HepG2 (cell line): ENCODE measurements at regions of chr20 and their contacts with region 1.

Region 1: DNA sequence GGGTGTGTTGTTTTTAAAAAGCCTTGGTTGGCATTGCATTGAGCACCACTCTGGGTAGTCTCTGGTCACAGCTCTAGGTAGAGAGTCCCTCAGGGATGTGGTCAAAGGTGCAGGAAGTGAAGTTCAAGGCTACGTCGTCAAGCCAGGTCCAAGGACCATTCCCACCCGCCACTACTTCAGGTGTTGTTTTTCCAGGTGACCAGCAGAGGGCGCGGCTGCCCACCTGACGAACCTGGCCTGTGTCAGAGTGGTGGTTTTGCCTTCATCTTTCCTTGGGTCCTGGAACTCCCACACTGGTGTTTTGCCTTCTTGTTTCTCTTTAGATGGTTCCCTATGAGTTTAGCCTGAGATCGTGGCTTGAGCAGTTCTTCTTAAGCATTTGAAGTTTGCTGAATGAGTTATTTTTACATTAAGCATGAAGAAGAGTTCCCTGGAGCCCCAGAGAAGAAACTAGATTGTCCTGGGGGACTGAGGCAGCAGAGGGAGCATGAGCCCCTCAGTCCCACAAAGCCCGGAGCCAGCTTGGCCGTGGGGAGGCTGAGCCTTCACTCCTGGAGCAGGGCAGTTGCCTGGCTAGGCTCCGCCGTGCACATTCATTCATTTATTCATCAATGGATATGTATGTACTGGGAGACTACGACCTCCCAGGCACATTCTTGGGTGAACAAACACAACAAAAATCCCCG is 5.6 kb upstream of the PHACTR3 start:
- DNase-seq: peak; percentile 55
- ATAC-seq: peak; percentile 89
- H3K4me3 ChIP-seq: no peak overlapping the region
- H3K27ac ChIP-seq: no peak overlapping the region
- H3K4me1 ChIP-seq: peaks cover 5% of the 10 kb centered on the region
- H3K27me3 ChIP-seq: peaks cover 3 to 22% of the 10 kb centered on the region in 2 experiments; a peak in 4 of 5 replicates
- CTCF ChIP-seq: peak; percentile 96
- EP300 ChIP-seq: no peak
- POLR2A ChIP-seq: no peak
- RAD21 ChIP-seq: peak; percentile 78

Region 2: DNA sequence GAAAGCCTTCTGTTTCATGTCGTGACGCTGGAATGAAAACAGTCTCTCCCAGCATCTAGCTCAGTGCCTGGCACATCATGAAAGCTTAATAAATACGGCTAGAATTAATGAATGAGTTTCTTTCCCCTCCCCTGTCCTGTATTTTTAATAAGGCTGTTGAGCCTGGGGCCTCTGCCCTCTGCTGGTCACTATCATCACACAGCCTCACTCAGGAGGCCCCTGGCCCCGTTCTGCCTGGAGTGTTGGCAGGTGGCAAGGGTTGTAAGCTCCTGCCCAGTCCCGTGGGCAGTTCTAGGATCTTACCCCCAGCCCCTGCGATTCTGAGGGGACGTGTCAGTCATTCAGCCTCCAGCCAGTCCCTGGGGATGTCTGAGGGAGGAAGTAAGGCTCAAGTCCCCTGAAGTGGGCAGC is 47.0 kb after region 1 on chr20:
- CTCF ChIA-PET with region 1: interaction called, 3 read pairs
- POLR2A ChIA-PET with region 1: no interaction called
- in situ Hi-C with region 1: no loop called
- intact Hi-C with region 1: loop called (anchors 2 kb)
- DNase-seq: no peak
- ATAC-seq: peak; percentile 94
- H3K4me3 ChIP-seq: no peak overlapping the region
- H3K27ac ChIP-seq: no peak overlapping the region
- H3K4me1 ChIP-seq: no peaks in the 10 kb centered on the region
- H3K27me3 ChIP-seq: peaks cover 0 to 21% of the 10 kb centered on the region in 2 experiments; a peak in 2 of 5 replicates
- CTCF ChIP-seq: peak; percentile 33; the same call in 1 of the 2 replicates
- EP300 ChIP-seq: no peak
- POLR2A ChIP-seq: no peak
- RAD21 ChIP-seq: no peak

Region 3: GRCh38 chr20:59751056-59751688 is 152.4 kb after region 1 on chr20:
- CTCF ChIA-PET with region 1: interaction called, 19 read pairs
- POLR2A ChIA-PET with region 1: no interaction called
- in situ Hi-C with region 1: loop called (anchors 5 kb)
- intact Hi-C with region 1: no loop called
- DNase-seq: peak; percentile 52
- ATAC-seq: peak; percentile 89
- H3K4me3 ChIP-seq: no peak overlapping the region
- H3K27ac ChIP-seq: no peak overlapping the region
- H3K4me1 ChIP-seq: no peaks in the 10 kb centered on the region
- H3K27me3 ChIP-seq: peaks cover 14 to 89% of the 10 kb centered on the region in 2 experiments
- CTCF ChIP-seq: peak; percentile 93
- EP300 ChIP-seq: no peak
- POLR2A ChIP-seq: no peak
- RAD21 ChIP-seq: peak; percentile 85

Region 4: DNA sequence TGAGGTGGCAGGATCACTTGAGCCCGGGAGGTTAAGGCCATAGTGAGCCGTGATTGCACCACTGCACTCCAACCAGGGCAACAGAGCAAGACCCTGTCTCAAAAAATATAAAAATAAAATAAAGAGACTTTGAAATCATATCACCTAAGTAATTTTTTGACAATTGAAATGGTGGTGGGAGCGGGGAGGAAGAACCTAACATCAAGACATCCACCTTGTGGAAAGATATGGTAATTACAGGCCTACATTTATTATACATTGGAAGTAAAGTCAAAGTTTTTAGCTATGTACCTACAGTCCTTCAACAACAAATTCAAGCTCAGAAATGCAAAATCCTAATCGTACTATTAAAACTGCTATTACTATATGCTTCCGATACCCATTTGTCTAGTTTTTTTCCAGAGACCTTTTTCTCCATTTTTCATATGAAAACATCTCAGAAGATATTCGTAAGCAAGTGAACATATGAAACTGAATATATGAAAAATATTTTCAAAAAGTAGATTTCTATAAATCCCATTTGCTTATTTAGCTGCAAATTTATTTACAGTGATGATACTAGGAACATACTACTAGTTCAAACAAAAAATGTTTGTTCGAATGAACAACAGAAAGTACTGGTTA is 251.4 kb after region 1 on chr20:
- CTCF ChIA-PET with region 1: no interaction called
- POLR2A ChIA-PET with region 1: no interaction called
- in situ Hi-C with region 1: no loop called
- intact Hi-C with region 1: loop called (anchors 10 kb)
- DNase-seq: peak; percentile 56
- ATAC-seq: peak; percentile 74
- H3K4me3 ChIP-seq: no peak overlapping the region
- H3K27ac ChIP-seq: no peak overlapping the region
- H3K4me1 ChIP-seq: no peaks in the 10 kb centered on the region
- H3K27me3 ChIP-seq: no peaks in the 10 kb centered on the region
- CTCF ChIP-seq: peak; percentile 57
- EP300 ChIP-seq: no peak
- POLR2A ChIP-seq: no peak
- RAD21 ChIP-seq: no peak